ENCODE measurements at regions of chr10 and their contacts with region 1.

Region 1: GRCh38 chr10:3814838-3815220 is 29.8 kb upstream of the KLF6 start:
- DNase-seq: no peak
- H3K4me3 ChIP-seq: no peak overlapping the region
- H3K27ac ChIP-seq: no peak overlapping the region
- H3K4me1 ChIP-seq: peaks cover 0 to 8% of the 10 kb centered on the region in 2 donors
- H3K27me3 ChIP-seq: no peaks in the 10 kb centered on the region
- CTCF ChIP-seq: no peak
- POLR2A ChIP-seq: no peak

Region 2: DNA sequence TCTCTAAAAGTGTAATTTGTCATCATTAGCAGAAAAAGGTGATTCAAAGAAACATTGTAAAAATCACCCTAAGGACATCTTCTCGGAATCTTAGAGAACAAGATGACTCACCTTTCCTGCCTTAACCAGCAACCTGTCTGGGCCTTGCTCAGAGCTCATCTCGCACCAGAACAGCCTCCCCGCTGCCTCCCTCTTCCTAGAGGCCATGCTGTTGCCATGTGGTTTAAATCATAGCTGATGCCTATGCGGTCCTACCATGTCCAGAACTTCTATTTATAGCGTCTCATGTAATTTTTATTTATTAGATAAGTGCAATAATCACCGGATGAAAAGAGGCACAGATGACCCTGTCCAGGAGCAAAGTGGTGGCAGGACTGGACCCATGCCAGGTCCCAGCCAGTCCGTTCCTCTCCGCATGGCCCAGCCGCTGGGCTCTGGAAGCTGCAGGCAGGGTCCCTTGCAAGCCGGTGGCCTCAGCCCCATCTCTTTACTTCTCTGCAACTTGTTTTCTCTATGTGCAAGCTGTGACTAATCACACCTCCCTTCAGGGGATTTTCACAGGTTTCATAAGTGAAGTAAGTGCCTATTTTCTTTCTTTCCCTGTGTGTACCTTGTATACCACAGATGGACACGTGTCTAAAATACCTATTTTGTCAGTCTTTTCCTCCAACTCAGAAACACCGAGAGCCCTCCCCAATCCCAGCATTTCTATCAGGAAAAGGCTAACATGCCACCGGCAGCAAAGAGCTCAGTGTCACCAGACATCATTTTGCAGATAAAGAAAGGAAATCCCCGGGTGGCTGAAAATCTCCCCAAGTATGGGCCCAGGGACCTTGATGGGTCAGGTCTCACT is 57.0 kb before region 1 on chr10:
- intact Hi-C with region 1: no loop called
- DNase-seq: no peak
- H3K4me3 ChIP-seq: no peak overlapping the region
- H3K27ac ChIP-seq: peak overlapping the region in 1 of 2 donors; percentile 52
- H3K4me1 ChIP-seq: no peaks in the 10 kb centered on the region
- H3K27me3 ChIP-seq: no peaks in the 10 kb centered on the region
- CTCF ChIP-seq: no peak
- POLR2A ChIP-seq: no peak

Region 3: DNA sequence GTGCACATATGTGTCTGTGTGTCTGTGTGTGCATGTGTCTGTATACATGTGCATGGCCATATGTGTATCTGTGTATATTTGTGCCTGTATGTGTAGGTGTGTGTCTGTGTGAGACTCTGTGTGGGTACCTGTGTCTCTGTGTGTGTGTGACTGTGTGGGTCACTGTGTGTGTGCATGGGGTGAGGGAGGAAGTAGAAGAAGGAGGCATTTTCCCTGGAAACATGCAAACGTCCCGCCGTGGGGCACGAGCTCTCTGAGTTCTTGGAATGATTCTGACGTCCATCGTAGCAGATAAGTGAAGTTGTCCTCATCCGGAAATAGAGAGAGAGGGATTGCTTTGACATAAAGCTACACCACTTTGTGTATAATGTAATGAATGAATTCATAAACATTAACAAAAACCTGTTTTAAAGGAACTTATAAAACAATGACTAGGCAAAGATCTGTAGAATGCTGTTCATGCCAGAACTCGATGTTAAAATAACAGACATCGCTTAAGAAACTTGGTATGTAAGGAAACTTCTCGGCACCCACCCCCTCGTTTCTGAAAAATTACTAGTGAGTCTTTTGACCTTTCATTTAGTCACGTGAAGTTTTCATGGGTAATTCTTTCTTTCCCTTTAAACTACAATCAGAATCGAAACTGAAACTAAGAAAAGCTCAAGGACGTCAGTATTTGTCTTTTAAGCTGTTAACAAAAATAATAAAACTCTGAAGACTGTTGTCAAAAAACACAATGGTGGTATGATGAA is 13.8 kb after region 1 on chr10:
- intact Hi-C with region 1: loop called (anchors 1 kb)
- DNase-seq: no peak
- H3K4me3 ChIP-seq: peak overlapping the region; percentile 41 to 58 (median 51)
- H3K27ac ChIP-seq: peak overlapping the region; percentile 65 to 84
- H3K4me1 ChIP-seq: no peaks in the 10 kb centered on the region
- H3K27me3 ChIP-seq: no peaks in the 10 kb centered on the region
- CTCF ChIP-seq: no peak
- POLR2A ChIP-seq: no peak

Region 4: GRCh38 chr10:5563991-5564536 is 1749.2 kb after region 1 on chr10:
- intact Hi-C with region 1: no loop called
- DNase-seq: peak in 1 of 2 donors; percentile 47
- H3K4me3 ChIP-seq: no peak overlapping the region
- H3K27ac ChIP-seq: no peak overlapping the region
- H3K4me1 ChIP-seq: no peaks in the 10 kb centered on the region
- H3K27me3 ChIP-seq: no peaks in the 10 kb centered on the region
- CTCF ChIP-seq: no peak
- POLR2A ChIP-seq: no peak

Measured in breast epithelium (tissue), 4 donors.